Dorsolateral prefrontal cortex (tissue), 120 donors: ENCODE measurements at regions of chr1 and their contacts with region 1.

Region 1: DNA sequence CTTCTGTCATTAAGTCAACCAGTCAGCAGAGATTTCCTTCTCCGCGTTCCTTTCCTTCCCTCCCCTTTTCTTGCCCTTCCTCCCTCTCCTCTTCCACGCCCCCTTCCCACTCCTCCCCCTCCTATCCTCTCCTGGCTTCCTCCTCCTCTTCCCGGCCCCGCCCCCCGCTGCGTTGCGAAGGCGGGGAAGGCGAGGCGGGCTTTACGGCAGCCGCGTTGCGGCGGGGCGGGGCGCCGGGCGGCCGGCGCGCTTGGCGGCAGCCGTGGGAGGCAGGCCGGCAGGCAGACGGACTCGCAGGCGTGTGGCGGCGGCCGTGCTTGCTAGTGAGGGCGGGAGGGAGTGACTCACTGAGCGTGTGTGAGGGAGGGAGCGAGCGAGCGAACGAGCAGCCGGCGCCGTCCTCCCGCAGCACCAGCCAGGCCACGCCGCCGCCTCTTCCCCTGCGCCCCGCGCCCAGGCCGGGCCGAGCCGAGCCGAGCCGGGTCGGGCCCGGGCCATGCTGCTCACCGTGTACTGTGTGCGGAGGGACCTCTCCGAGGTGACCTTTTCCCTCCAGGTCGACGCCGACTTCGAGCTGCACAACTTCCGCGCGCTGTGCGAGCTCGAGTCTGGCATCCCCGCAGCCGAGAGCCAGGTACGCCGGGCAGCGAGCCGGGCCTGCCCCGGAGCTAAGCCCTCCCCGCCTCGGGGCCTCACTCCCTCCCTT is at the start of gene DDI2:
- DNase-seq: peak; percentile 81 to 97 (median 92)
- H3K4me3 ChIP-seq: peak within 1 kb of the TSS; percentile 69 to 99 (median 94)
- H3K27ac ChIP-seq: peak within 1 kb of the TSS; percentile 49 to 97 (median 91)
- H3K27me3 ChIP-seq: no peaks in the 10 kb centered on the region
- CTCF ChIP-seq: peak in 20 of 56 donors; percentile 3 to 49 (median 16)
- total RNA-seq, gene DDI2: 28.6 to 49.9 (median 38.4) TPM

Region 2: DNA sequence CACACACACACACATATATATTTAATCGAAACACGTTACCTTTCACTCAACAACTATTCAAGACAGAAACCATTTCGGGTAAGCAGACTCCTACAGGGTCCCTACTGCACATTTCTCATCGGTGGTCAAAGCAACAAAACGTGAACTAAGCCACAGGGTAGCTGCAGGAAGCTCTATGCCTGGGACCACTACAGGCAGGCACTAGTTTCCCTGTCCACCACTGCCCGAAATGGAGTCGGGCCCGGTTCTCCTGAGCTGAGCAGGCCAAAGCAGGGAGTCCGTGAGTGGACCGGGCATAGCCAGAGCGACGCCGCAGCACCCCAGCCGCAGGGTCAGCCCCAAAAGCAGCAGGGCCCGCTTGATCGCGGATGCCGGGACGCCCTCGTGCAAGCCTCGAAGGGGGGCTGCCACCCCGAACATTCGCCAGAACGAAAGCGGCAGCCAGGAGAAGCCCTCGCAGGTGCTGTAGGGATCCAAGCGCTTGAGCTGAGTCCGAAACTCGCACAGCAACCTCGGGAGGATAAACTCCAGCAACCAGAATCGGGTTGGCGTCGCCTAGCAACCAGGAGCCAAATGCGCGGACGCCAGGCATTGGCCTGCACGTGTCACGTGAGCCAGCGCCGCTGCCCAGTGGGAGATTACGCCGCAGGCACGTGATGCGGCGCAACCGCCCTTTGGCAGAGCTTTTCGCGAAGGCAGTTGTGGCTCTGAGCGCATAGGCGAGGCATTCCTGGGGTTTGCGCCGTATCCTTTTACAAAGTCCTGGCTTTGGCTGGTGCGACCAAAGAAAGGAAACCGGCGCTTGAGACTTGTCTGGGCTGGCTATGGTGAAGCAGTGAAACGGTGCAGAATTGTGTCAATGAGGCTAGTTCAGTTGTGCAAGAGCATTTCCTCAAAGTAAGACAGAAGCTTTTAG is 14.0 kb before region 1 on chr1:
- intact Hi-C with region 1: loop called in 1 of 2 experiments (anchors 1 kb)
- DNase-seq: peak; percentile 97 to 98 (median 98)
- H3K4me3 ChIP-seq: peak overlapping the region; percentile 60 to 98 (median 87)
- H3K27ac ChIP-seq: peak overlapping the region in 58 of 59 donors; percentile 58 to 96 (median 86)
- H3K27me3 ChIP-seq: no peaks in the 10 kb centered on the region
- CTCF ChIP-seq: peak in 13 of 56 donors; percentile 1 to 38 (median 20)

Region 3: GRCh38 chr1:15684468-15685291 is 67.4 kb after region 1 on chr1:
- intact Hi-C with region 1: loop called in 1 of 2 experiments (anchors 5 kb)
- DNase-seq: peak in 3 of 10 donors; percentile 42 to 53 (median 51)
- H3K4me3 ChIP-seq: peak overlapping the region; percentile 48 to 97 (median 87)
- H3K27ac ChIP-seq: peak overlapping the region in 56 of 59 donors; percentile 22 to 96 (median 86)
- H3K27me3 ChIP-seq: no peaks in the 10 kb centered on the region
- CTCF ChIP-seq: peak in 4 of 56 donors; percentile 12 to 16 (median 14)

Region 4: GRCh38 chr1:15703562-15703961 is 86.2 kb after region 1 on chr1:
- intact Hi-C with region 1: loop called in 1 of 2 experiments (anchors 10 kb)
- DNase-seq: peak; percentile 35 to 90 (median 82)
- H3K4me3 ChIP-seq: peak overlapping the region in 26 of 59 donors; percentile 3 to 41 (median 19)
- H3K27ac ChIP-seq: peak overlapping the region in 58 of 59 donors; percentile 37 to 96 (median 87)
- H3K27me3 ChIP-seq: no peaks in the 10 kb centered on the region
- CTCF ChIP-seq: no peak